ENCODE measurements at regions of chr4 and their contacts with region 1.

Region 1: GRCh38 chr4:39044364-39044955 is 12.3 kb upstream of the TMEM156 start:
- DNase-seq: peak; percentile 94
- H3K4me3 ChIP-seq: peak overlapping the region; percentile 60 to 98 (median 95)
- H3K27ac ChIP-seq: peak overlapping the region; percentile 92
- H3K4me1 ChIP-seq: peaks cover 25% of the 10 kb centered on the region
- H3K27me3 ChIP-seq: no peaks in the 10 kb centered on the region
- CTCF ChIP-seq: no peak
- POLR2A ChIP-seq: peak; percentile 81

Region 2: DNA sequence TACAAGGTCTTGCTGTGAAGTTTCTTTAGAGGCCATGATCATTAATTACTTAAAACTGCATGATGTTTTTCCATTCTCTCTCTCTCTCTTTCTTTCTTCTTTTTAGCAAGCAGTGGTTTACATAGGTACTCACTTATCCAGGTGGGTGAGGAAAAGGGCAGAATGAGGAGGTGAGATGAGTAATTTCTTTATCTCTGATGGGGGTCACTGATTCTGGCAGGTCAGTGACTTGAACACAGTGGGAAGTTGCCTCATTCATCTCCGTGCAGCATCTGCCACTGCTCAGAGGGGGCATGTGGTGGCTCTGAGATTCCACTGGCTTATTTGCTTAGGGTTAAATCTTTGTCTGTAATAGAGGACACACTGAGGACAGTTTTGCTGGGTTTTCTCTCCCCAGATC is 114.3 kb before region 1 on chr4:
- CTCF ChIA-PET with region 1: interaction called, 4 read pairs
- POLR2A ChIA-PET with region 1: no interaction called
- dilution Hi-C with region 1: no loop called
- intact Hi-C with region 1: loop called (anchors 5 kb)
- DNase-seq: no peak
- H3K4me3 ChIP-seq: no peak overlapping the region
- H3K27ac ChIP-seq: no peak overlapping the region
- H3K4me1 ChIP-seq: no peaks in the 10 kb centered on the region
- H3K27me3 ChIP-seq: no peaks in the 10 kb centered on the region
- CTCF ChIP-seq: no peak
- POLR2A ChIP-seq: no peak

Region 3: GRCh38 chr4:38985410-38986100 is 58.9 kb before region 1 on chr4:
- CTCF ChIA-PET with region 1: interaction called, 4 read pairs
- POLR2A ChIA-PET with region 1: no interaction called
- dilution Hi-C with region 1: no loop called
- intact Hi-C with region 1: loop called (anchors 5 kb)
- DNase-seq: no peak
- H3K4me3 ChIP-seq: no peak overlapping the region
- H3K27ac ChIP-seq: no peak overlapping the region
- H3K4me1 ChIP-seq: no peaks in the 10 kb centered on the region
- H3K27me3 ChIP-seq: no peaks in the 10 kb centered on the region
- CTCF ChIP-seq: no peak
- POLR2A ChIP-seq: no peak

Region 4: DNA sequence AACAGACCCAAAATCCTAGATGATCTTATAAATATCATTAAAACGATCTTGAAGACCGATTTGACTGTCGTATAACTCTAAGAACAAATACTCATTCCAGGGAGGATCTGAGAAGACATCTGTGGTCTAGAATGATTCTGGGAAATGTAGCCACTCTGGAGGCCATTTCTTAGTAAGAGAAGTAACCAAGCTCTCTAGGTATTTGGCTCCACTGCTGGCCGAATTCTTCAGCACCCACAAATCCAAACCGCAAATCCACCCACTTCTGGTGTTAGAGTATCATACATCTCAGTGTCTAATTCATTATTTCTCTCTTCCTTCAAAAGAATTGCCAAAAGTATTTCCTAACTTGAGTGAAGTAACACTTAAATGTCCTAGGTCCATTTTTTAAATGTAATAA is 41.4 kb after region 1 on chr4:
- CTCF ChIA-PET with region 1: no interaction called
- POLR2A ChIA-PET with region 1: no interaction called
- dilution Hi-C with region 1: no loop called
- intact Hi-C with region 1: loop called (anchors 5 kb)
- DNase-seq: no peak
- H3K4me3 ChIP-seq: no peak overlapping the region
- H3K27ac ChIP-seq: no peak overlapping the region
- H3K4me1 ChIP-seq: peaks cover 2% of the 10 kb centered on the region
- H3K27me3 ChIP-seq: no peaks in the 10 kb centered on the region
- CTCF ChIP-seq: no peak
- POLR2A ChIP-seq: no peak